Activated T-helper 1 cell treated with anti-CD3 and anti-CD28 coated beads, Interleukin-12 subunit alpha, Interleukin-12 subunit beta, Interleukin-2, Interleukin-4 antibody, amounts not matched to agents 30 ng/mL and 10 ng/mL and 1 ng/mL, durations not matched to agents 14 hours and 24 hours and 36 hours (primary cell): ENCODE measurements at regions of chr19 and their contacts with region 1.

Region 1: GRCh38 chr19:35066691-35067563 is 25.4 kb downstream of the HPN start:
- DNase-seq: peak; percentile 79
- H3K4me3 Mint-ChIP-seq: peak overlapping the region; percentile 42
- H3K27ac Mint-ChIP-seq: peak overlapping the region; percentile 57
- H3K4me1 Mint-ChIP-seq: peaks cover 16% of the 10 kb centered on the region
- H3K27me3 Mint-ChIP-seq: peaks cover 6% of the 10 kb centered on the region

Region 2: DNA sequence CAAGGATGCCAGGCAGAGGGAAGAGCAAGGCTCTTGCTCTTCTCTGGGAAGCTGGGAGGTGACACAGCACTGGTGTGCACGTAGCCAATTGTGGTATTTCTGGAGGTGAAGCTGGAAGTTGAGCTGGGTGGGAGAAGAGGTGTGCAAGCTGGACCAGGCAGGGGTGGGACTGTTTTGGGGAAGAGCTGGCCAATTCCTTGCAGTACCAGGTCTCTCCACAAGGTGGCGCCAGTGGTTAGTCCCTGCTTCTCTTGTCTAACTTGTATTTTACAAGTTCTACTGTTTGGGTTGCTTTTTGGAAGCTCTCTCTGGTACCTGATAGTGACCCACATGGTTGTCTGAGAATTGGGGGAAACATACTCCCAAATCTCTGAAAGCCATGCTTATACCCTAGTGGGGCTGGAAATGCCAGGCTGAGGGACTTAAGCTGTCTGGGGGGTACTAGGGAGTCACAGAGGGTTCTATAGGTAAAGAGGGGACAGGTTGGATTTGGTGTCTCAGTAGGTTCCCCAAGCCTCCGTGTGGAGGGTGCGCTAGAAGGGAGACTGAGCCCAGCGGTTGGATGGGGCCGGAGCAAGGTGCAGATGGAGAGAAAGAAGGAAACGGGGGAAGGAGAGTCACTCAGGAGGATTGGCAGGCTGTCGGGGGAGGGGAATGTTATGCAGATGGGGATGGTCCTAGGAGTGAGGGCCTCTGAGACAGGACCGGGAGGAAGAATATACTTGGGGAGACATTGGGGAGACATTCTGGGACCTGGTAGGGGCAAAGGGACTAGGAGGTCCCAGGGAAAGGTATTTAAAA is 22.4 kb before region 1 on chr19:
- intact Hi-C with region 1: loop called (anchors 1 kb)
- DNase-seq: peak; percentile 32
- H3K4me3 Mint-ChIP-seq: no peak overlapping the region
- H3K27ac Mint-ChIP-seq: no peak overlapping the region
- H3K4me1 Mint-ChIP-seq: peaks cover 28% of the 10 kb centered on the region
- H3K27me3 Mint-ChIP-seq: peaks cover 9% of the 10 kb centered on the region

Region 3: GRCh38 chr19:35090506-35091237 is 23.7 kb after region 1 on chr19:
- intact Hi-C with region 1: loop called (anchors 1 kb)
- DNase-seq: no peak
- H3K4me3 Mint-ChIP-seq: no peak overlapping the region
- H3K27ac Mint-ChIP-seq: no peak overlapping the region
- H3K4me1 Mint-ChIP-seq: no peaks in the 10 kb centered on the region
- H3K27me3 Mint-ChIP-seq: peaks cover 3% of the 10 kb centered on the region

Region 4: DNA sequence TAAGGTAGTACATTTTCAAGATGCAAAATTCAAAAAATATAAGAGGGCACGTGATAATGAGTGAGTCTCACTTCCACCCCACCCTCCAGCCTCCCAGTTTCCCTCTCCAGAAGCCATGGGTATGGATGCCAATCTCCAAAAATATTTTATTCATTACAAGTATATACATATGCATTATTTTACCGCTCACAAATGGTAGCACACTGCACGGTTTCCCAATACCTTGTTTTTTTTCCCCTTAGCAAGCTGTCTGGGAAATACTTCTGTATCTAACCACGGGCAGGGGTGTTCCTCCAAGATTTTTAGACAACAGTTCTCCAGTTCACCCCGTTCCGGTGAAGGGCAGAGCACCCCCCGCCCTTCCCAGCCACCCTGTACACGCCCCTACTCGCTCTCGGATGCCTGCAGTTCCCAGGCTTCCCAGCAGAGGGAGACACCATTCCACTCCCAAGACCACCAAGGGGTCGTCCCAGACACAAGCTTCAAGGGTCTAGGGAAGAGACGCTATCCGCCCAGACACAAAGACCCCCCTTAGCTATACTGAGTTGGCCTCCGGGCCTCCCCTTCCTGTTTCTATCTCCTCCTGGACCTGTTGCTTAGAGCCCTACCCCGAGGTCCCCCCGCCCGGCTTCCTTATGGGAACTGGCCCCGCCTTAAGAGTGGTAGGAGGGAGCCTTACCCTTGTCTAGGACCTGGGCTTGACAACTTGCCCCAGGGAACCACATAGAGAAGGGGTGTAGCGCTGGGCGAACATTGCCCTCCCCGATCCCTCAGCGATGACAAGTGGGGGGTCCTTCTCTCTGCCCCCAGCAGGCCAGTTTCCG is 47.6 kb after region 1 on chr19:
- intact Hi-C with region 1: no loop called
- DNase-seq: peak; percentile 38
- H3K4me3 Mint-ChIP-seq: no peak overlapping the region
- H3K27ac Mint-ChIP-seq: no peak overlapping the region
- H3K4me1 Mint-ChIP-seq: peaks cover 6% of the 10 kb centered on the region
- H3K27me3 Mint-ChIP-seq: peaks cover 7% of the 10 kb centered on the region

Region 5: DNA sequence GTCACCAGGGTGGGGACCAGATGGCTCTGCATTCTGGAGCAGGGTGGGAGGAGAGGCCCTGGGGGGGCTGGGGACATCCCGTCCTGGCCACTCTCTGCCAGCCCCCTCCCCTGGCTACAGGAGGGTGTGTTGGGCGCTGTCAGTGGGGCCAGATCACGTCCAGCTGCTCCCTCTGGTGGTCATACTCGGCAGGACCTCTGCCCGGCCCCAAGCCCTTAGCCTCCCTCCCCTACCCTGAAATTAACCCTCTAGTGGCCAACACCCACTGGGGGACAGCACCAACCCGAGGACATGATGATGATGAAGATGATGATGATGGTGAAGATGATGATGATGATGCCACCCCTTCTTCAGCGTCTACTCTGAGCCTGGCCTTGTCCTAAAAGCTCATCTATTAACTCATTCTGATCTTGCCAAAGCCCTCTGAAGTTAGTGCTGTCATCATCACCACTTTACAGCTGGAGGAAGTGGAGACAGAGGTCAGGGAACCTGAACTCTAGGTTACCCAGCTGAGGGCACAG is 68.5 kb after region 1 on chr19:
- intact Hi-C with region 1: loop called (anchors 1 kb)
- DNase-seq: peak; percentile 50
- H3K4me3 Mint-ChIP-seq: no peak overlapping the region
- H3K27ac Mint-ChIP-seq: no peak overlapping the region
- H3K4me1 Mint-ChIP-seq: peaks cover 8% of the 10 kb centered on the region
- H3K27me3 Mint-ChIP-seq: peaks cover 3% of the 10 kb centered on the region